ENCODE measurements at regions of chr5 and their contacts with region 1.

Region 1: DNA sequence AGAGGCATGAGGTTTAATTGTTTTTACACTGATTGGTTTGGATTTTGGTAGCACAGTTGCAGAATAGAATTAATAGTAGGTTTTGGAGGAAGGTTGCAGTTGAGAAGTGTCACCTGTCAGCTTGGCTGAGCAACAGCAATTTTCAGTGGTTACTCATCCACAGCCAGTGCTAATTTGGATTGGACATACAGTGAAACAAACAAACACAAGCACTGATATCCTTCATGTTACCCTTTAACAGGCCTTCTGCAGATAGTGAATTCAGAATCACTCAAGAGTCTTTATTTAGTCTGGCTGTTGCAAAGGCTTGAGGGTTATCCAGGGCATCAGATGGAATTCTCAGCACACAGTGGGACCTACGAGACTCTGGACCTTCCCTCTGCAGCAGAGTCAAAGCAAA is 31.8 kb upstream of the POU4F3 start:
- DNase-seq: no peak
- H3K4me3 ChIP-seq: no peak overlapping the region
- H3K27ac ChIP-seq: no peak overlapping the region
- H3K4me1 ChIP-seq: no peaks in the 10 kb centered on the region
- H3K27me3 ChIP-seq: no peaks in the 10 kb centered on the region
- CTCF ChIP-seq: no peak

Region 2: GRCh38 chr5:146340260-146341081 is 33.6 kb after region 1 on chr5:
- CTCF ChIA-PET with region 1: no interaction called
- dilution Hi-C with region 1: loop called (anchors 5 kb)
- in situ Hi-C with region 1: no loop called
- intact Hi-C with region 1: no loop called
- DNase-seq: peak; percentile 42
- H3K4me3 ChIP-seq: no peak overlapping the region
- H3K27ac ChIP-seq: no peak overlapping the region
- H3K4me1 ChIP-seq: no peaks in the 10 kb centered on the region
- H3K27me3 ChIP-seq: peaks cover 87% of the 10 kb centered on the region
- CTCF ChIP-seq: no peak

Measured in mammary epithelial cell (primary cell).